ENCODE measurements at regions of chr6 and their contacts with region 1.

Region 1: GRCh38 chr6:24991810-24992467 is 56.2 kb upstream of the RIPOR2 start:
- DNase-seq: no peak
- H3K4me3 ChIP-seq: no peak overlapping the region
- H3K27ac ChIP-seq: no peak overlapping the region
- H3K27me3 ChIP-seq: no peaks in the 10 kb centered on the region
- CTCF ChIP-seq: peak; percentile 70

Region 2: DNA sequence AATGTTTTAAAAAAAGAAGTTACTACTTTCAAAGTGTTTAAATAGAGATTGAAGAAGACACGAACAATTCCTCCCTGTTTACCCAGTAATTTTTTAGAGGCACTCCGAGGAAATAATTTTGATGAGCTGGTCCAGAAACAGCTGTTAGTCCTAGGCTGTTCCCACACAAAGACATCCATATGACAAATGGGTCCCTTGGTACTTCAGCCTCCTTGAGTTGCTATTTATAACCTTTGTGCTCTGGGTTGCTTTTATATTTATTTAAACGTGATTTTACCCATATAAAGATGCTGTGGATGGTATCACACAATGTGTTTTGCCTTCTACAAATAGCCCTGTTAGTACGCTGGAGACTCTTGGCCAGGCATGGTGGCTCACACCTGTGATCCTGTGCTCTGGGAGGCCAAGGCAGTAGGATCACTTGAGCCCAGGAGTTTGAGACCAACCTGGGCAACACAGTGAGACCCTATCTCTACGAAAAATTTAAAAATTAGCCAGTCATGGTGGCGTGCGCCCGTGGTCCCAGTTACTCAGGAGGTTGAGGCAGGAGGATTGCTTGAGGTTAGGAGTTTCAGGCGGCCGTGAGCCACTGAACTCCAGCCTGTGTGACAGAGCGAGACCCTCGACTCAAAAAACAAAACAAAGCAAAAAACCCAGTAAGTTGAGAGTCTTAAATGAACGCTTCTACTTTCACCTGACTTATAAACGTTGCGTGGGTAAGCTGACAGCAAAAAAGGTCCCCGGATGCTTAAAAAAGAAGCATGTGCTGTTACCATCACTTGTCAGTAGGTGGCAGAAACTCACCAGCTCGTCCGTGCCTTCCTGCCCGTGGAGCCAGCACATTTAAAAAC is 136.3 kb before region 1 on chr6:
- CTCF ChIA-PET with region 1: interaction called, 64 read pairs
- POLR2A ChIA-PET with region 1: no interaction called
- DNase-seq: peak; percentile 59
- H3K4me3 ChIP-seq: no peak overlapping the region
- H3K27ac ChIP-seq: no peak overlapping the region
- H3K27me3 ChIP-seq: no peaks in the 10 kb centered on the region
- CTCF ChIP-seq: peak; percentile 95

Region 3: GRCh38 chr6:24910961-24911712 is 80.8 kb before region 1 on chr6:
- CTCF ChIA-PET with region 1: interaction called, 13 read pairs
- POLR2A ChIA-PET with region 1: no interaction called
- DNase-seq: no peak
- H3K4me3 ChIP-seq: peak overlapping the region; percentile 72
- H3K27ac ChIP-seq: no peak overlapping the region
- H3K27me3 ChIP-seq: peaks cover 2% of the 10 kb centered on the region
- CTCF ChIP-seq: no peak

Region 4: DNA sequence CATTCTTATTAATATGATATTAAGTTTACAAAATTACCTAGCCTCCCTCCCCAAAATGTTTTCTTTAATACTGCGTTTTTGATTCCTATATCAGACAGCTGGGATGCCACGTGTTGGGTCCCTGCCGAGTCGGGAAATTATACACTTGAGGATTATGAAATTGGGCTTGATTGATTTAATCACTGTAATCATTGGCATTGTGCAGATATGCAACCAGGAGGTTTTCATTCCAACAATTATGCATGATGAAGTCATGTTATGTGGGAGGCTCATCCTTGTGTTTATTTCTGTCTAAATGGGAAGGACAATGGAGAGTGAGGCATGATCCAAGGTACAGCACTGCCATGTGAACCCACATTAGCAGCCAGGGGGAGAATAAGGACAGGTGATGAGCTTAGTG is 25.6 kb before region 1 on chr6:
- CTCF ChIA-PET with region 1: interaction called, 14 read pairs
- POLR2A ChIA-PET with region 1: no interaction called
- DNase-seq: no peak
- H3K4me3 ChIP-seq: no peak overlapping the region
- H3K27ac ChIP-seq: no peak overlapping the region
- H3K27me3 ChIP-seq: no peaks in the 10 kb centered on the region
- CTCF ChIP-seq: no peak

Region 5: GRCh38 chr6:25006565-25007001 is 14.6 kb after region 1 on chr6:
- CTCF ChIA-PET with region 1: interaction called, 34 read pairs
- POLR2A ChIA-PET with region 1: no interaction called
- DNase-seq: no peak
- H3K4me3 ChIP-seq: no peak overlapping the region
- H3K27ac ChIP-seq: no peak overlapping the region
- H3K27me3 ChIP-seq: no peaks in the 10 kb centered on the region
- CTCF ChIP-seq: no peak

Region 6: GRCh38 chr6:25053875-25054371 is 62.0 kb after region 1 on chr6:
- CTCF ChIA-PET with region 1: interaction called, 12 read pairs
- POLR2A ChIA-PET with region 1: no interaction called
- DNase-seq: peak; percentile 59
- H3K4me3 ChIP-seq: no peak overlapping the region
- H3K27ac ChIP-seq: peak overlapping the region; percentile 92
- H3K27me3 ChIP-seq: no peaks in the 10 kb centered on the region
- CTCF ChIP-seq: 0 out of 2 replicates have a peak, but pooled peaks have one; percentile 5

Measured in AG04450 (cell line).